Head of caudate nucleus (tissue), 42 donors: ENCODE measurements at regions of chr4 and their contacts with region 1.

Region 1: DNA sequence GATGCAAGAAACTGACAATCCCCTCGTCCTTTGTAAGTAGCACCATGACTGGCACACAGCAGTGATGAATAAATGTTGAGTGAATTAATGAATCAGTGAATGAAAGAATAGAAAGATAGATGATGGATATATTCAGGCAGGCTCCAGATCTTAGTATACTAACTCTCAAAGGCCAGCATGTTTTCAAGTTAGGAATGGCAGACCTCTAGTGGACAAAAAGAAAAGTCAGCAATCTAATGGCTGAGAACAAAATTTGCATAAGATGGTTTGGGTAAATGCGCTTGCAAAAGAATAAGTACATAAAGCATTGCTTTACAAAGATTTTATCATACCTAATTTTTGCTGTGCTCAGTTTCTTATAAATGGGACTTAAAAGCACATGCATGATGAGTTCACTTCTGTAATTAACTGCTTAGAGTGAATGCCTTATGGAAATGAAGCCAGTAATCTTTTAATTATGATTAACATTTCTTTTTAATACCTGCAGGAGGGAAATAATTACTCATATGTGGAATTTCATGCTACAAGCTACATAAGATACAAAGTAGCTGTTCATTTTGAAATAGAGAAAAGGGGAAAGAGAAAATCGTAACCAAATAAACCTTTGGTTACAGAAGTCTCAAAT is 126.9 kb upstream of the GPRIN3 start:
- DNase-seq: peak in 8 of 42 donors; percentile 7 to 46 (median 15)

Region 2: DNA sequence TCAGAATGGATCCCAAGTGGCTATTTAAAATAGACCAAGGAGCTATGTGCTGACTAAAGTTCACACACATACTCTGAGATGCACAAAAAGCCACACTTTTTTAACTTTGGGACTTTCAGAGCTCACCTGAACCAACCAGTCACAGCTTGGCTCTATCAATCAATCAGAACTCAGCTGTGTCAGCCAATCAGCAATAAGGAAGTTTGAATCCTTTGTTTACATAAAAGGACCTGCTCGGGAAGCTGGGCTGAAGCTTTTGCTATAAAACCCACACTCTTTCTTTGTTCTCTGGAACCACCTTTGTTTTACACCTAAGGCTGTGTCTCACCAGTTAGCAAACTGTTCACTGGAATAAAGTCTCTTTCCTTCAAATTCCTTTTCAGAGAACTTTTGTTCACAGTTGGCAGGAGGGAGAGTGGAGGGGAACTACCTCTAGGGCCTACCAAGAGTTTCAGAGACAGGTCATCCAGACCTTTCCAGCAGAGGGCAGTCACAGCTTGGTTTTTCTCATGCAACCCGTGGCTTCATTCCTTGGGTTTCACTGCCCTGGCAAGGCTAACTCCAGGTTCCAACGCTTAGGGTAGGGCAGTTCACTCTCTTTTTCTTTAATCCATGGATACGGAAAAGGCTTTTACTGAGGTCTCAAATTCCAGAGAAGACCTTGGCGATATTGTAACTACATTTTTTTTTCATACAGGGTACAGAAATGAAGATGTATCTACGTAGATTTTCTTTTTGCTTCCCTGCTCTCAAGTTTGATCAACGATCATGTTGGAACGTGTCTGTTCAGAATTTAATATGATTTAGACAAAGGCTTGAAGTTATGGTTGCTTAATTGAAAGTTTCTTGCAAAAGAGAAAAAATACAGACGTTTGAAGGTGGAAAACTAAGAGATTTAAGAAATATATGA is 207.6 kb before region 1 on chr4:
- intact Hi-C with region 1: loop called (anchors 2 kb)
- DNase-seq: peak; percentile 57 to 91 (median 82)

Region 3: DNA sequence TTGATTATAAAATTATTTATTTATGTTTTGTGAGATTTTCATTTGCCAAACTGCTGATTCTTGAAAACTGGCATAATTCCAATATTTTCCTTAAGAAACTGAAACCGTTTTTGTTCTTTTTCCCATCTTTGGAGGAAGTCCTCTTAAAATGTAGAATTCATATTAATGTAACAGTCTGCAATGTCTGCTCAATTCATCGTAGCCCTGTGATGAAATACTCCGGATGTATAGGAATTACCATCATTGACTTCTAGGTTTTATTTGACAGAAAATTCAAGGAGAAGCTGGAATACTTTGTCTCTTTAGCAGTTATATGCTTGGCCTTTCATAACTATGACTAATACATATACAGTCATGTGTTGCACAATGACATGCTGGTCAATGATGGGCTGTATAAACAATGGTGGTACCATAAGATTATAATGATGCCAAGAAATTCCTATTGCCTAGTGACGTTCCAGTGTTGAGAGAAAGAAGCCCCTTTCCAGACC is 58.1 kb after region 1 on chr4:
- intact Hi-C with region 1: no loop called
- DNase-seq: no peak